Activated CD4-positive, alpha-beta memory T cell treated with anti-CD3 and anti-CD28 coated beads for 36 hours (primary cell): ENCODE measurements at regions of chr15 and their contacts with region 1.

Region 1: DNA sequence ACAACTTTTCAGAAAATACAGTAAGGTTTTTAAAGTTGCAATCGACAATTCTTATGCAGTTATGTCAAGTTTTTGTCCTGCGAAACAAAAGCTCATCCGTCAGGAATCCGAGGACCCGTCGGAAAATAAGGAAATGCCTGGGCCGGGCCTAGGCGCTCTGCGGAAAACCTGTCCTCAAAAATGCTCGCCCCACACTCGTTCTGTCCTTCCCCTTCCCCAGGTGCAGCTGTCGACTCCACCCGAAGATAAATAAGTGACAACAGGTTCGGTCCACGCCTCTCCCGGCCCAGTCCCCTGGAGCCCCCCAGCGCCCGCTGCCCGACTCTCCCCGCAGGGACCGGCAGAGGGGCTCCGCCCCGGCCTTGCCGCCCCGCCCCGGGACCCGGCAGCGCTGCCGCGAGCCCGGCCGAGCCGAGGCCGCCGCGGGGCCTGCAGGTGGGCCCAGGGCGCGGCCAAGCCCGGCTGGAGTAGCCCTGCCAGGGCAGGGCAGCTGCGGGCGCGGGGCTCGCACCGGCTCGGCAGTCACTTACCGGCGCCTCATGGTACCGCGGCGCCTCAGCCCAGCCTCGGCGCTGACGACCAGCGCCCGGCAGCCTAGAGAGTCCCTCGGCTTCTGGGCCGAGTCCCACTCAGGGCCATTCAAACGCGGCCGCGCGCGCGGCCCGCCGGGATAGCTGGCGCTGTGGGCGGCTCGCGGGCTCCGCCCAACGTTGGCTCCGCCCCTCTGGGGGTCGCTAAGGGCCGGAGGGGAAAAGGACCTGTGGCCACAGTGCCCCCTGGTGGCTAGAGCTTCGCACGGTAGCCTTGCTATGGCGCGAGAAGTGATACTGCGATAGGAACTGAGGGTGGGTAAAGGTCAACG is at the start of gene KATNBL1:
- DNase-seq: peak; percentile 98
- H3K4me3 Mint-ChIP-seq: peak within 1 kb of the TSS; percentile 87
- H3K27ac Mint-ChIP-seq: peak within 1 kb of the TSS; percentile 69
- H3K4me1 Mint-ChIP-seq: peaks cover 25% of the 10 kb centered on the region
- H3K27me3 Mint-ChIP-seq: no peaks in the 10 kb centered on the region
- total RNA-seq, gene KATNBL1: 44.7 to 56.7 TPM

Region 2: DNA sequence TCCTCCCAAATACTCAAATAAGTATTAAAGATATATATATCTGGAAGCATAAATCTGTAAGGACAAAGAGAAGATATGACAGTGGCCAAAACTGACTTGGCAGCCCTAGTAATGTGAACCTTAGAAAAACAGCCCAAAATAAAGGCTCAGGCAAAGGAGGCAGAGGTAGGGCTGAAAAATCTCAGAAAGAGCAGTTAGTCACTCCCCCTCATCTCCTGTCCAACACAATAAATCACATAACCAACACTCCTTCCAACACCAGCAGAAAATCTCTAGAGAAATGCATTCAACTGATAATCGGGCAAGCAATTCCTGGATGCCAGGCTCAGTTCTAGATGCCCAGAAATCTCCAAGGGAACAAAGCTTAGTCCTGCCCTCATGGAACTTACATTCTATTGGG is 263.5 kb before region 1 on chr15:
- CTCF ChIA-PET with region 1: no interaction called
- POLR2A ChIA-PET with region 1: no interaction called
- intact Hi-C with region 1: no loop called
- DNase-seq: no peak
- H3K4me3 Mint-ChIP-seq: no peak overlapping the region
- H3K27ac Mint-ChIP-seq: no peak overlapping the region
- H3K4me1 Mint-ChIP-seq: no peaks in the 10 kb centered on the region
- H3K27me3 Mint-ChIP-seq: no peaks in the 10 kb centered on the region

Region 3: DNA sequence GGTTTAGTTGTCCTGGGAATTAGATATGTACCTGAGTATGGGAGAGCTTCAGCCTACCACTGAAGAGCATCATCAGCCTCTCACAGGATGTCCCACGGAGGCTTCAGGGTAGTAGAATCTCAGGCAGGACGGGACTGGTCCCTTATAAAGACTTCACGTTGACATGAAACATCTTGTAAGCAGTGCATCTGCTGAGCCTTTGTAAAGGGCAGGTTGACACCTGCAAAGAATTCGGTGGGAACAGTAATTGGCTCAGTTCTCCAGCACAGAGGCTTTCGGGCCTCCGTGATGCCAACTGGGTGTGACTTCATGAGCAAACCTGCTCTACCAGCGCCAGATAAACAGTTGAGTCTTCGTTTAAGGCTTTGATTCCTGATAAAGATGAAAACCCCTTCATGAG is 143.7 kb before region 1 on chr15:
- CTCF ChIA-PET with region 1: interaction called, 74 read pairs
- POLR2A ChIA-PET with region 1: no interaction called
- intact Hi-C with region 1: loop called (anchors 1 kb)
- DNase-seq: no peak
- H3K4me3 Mint-ChIP-seq: no peak overlapping the region
- H3K27ac Mint-ChIP-seq: no peak overlapping the region
- H3K4me1 Mint-ChIP-seq: peaks cover 4% of the 10 kb centered on the region
- H3K27me3 Mint-ChIP-seq: no peaks in the 10 kb centered on the region

Region 4: GRCh38 chr15:34109797-34110663 is 99.6 kb before region 1 on chr15:
- CTCF ChIA-PET with region 1: interaction called, 98 read pairs
- POLR2A ChIA-PET with region 1: interaction called, 3 read pairs
- intact Hi-C with region 1: loop called (anchors 1 kb)
- DNase-seq: no peak
- H3K4me3 Mint-ChIP-seq: no peak overlapping the region
- H3K27ac Mint-ChIP-seq: no peak overlapping the region
- H3K4me1 Mint-ChIP-seq: no peaks in the 10 kb centered on the region
- H3K27me3 Mint-ChIP-seq: peaks cover 5% of the 10 kb centered on the region

Region 5: DNA sequence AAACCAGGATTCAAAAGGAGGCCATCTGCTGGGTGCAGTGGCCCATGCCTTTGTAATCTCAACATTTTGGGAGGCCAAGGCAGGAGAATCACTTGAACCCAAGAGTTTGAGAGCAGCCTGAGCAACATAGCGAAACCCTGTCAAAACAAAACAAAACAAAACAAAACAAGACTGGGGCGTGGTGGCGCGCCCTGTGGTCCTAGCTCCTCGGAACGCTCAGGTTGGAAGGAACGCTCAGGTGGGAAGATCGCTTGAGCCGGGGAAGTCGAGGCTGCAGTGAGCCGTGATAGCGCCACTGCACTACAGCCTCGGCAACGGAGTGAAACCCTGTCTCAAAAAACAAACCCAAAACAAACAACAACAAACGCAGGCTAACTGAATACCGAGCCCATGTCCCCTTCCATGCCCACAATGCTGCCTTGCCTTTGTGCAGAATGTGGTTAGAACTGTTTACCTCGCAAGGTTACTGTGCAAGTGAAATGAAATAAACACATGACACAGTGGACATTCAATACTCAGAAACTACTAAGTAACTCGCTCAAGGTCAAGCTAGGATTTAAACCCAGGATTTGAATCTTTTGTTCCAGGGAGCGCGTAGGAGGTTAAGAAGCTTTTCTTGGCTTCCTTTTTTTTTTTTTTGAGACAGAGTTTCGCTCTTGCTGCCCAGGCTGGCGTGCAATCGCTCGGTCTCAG is 14.4 kb after region 1 on chr15:
- CTCF ChIA-PET with region 1: interaction called, 8 read pairs
- POLR2A ChIA-PET with region 1: interaction called, 3 read pairs
- intact Hi-C with region 1: loop called (anchors 1 kb)
- DNase-seq: no peak
- H3K4me3 Mint-ChIP-seq: peak overlapping the region; percentile 98
- H3K27ac Mint-ChIP-seq: peak overlapping the region; percentile 98
- H3K4me1 Mint-ChIP-seq: peaks cover 27% of the 10 kb centered on the region
- H3K27me3 Mint-ChIP-seq: peaks cover 2% of the 10 kb centered on the region

Region 6: GRCh38 chr15:34259566-34259965 is 49.9 kb after region 1 on chr15:
- CTCF ChIA-PET with region 1: no interaction called
- POLR2A ChIA-PET with region 1: no interaction called
- intact Hi-C with region 1: no loop called
- DNase-seq: no peak
- H3K4me3 Mint-ChIP-seq: no peak overlapping the region
- H3K27ac Mint-ChIP-seq: no peak overlapping the region
- H3K4me1 Mint-ChIP-seq: peaks cover 3% of the 10 kb centered on the region
- H3K27me3 Mint-ChIP-seq: no peaks in the 10 kb centered on the region

Region 7: GRCh38 chr15:34297059-34297458 is 87.4 kb after region 1 on chr15:
- CTCF ChIA-PET with region 1: no interaction called
- POLR2A ChIA-PET with region 1: no interaction called
- intact Hi-C with region 1: no loop called
- DNase-seq: no peak
- H3K4me3 Mint-ChIP-seq: no peak overlapping the region
- H3K27ac Mint-ChIP-seq: no peak overlapping the region
- H3K4me1 Mint-ChIP-seq: peaks cover 17% of the 10 kb centered on the region
- H3K27me3 Mint-ChIP-seq: no peaks in the 10 kb centered on the region